ENCODE measurements at regions of chr5 and their contacts with region 1.

Region 1: DNA sequence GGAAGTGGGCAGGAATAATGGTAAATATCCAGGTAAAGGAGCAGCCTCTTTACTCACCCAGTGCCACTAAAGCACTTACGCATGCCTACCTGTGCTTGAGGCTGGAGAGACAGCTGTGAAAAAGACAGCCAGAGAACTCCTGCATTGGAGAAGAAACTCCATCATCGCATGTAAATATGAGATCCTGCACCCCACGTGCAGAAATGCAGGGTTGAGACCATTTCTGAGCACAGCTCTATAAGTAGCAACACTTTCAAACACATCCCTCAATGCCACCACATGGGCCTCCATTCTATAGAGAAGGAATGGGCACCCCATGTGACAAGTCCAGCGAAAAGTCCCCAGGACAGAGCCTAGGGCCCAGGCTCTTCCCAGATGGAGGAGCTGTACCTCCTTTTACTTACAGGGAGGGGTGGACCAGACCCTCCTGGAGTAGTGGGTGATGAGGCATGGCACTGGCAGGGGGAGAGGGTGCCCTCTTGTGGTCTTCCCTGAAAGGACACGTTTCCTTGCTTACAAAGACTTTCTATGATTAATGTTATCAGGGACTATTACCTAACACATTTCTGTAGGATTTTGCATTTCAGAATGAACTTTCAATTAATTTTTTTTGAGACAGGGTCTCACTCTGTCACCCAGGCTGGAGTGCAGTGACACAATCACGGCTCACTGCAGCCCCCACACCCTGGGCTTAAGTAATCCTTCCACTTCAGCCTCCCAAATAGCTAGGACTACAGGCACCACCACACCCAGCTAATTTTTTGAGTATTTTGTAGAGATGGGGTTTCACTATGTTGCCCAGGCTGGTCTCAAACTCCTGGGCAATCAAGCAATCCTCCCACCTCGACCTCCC is 55.3 kb upstream of the IL17B start:
- DNase-seq: peak; percentile 63
- ATAC-seq: peak; percentile 62
- H3K4me3 Mint-ChIP-seq: no peak overlapping the region
- H3K27ac Mint-ChIP-seq: no peak overlapping the region
- H3K4me1 Mint-ChIP-seq: peaks cover 28% of the 10 kb centered on the region
- H3K27me3 Mint-ChIP-seq: no peaks in the 10 kb centered on the region

Region 2: GRCh38 chr5:149317281-149318048 is 116.9 kb before region 1 on chr5:
- CTCF ChIA-PET with region 1: interaction called, 11 read pairs
- POLR2A ChIA-PET with region 1: no interaction called
- DNase-seq: peak; percentile 48
- ATAC-seq: peak; percentile 55
- H3K4me3 Mint-ChIP-seq: no peak overlapping the region
- H3K27ac Mint-ChIP-seq: no peak overlapping the region
- H3K4me1 Mint-ChIP-seq: no peaks in the 10 kb centered on the region
- H3K27me3 Mint-ChIP-seq: no peaks in the 10 kb centered on the region

Region 3: DNA sequence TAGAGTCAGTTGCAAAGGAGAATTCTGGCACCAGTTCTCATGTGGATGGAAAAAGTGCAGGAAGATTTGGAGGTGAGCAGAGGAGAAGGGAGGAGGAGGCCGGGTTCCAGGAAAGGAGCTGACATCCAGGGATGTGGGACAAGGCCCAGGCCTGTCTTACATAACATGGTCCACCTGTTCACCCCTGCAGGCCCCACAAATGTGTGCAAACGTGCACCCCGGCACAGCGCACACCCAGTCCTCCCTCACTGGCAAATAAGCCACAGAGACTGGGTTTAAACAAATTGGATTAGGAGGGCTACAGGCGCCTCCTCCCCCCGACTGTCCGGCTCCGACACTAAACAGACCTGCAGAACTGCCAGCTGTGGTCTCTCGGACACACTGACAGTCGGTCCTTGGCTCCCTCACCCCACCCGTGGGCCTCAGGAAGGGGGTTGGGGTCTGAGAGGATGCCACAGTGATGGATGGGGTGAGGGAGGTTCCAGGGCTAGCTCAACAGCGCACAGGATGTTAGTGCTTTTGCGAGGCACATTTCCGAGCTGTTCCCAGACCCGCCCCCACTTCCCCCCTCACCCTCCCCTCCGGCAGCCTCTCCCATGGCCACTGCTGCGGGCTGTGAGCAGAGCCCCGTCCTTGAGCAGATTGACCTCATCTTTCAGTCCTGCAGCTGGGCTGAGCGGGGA is 11.9 kb before region 1 on chr5:
- CTCF ChIA-PET with region 1: interaction called, 32 read pairs
- POLR2A ChIA-PET with region 1: no interaction called
- DNase-seq: no peak
- ATAC-seq: peak; percentile 50
- H3K4me3 Mint-ChIP-seq: no peak overlapping the region
- H3K27ac Mint-ChIP-seq: peak overlapping the region; percentile 32
- H3K4me1 Mint-ChIP-seq: peaks cover 7% of the 10 kb centered on the region
- H3K27me3 Mint-ChIP-seq: peaks cover 4% of the 10 kb centered on the region

Region 4: GRCh38 chr5:149551200-149552037 is 117.0 kb after region 1 on chr5 and contains the start of gene CSNK1A1:
- CTCF ChIA-PET with region 1: interaction called, 11 read pairs
- POLR2A ChIA-PET with region 1: interaction called, 4 read pairs
- DNase-seq: peak; percentile 99
- ATAC-seq: peak; percentile 93
- H3K4me3 Mint-ChIP-seq: peak within 1 kb of the TSS; percentile 96
- H3K27ac Mint-ChIP-seq: peak within 1 kb of the TSS; percentile 99
- H3K4me1 Mint-ChIP-seq: peaks cover 33% of the 10 kb centered on the region
- H3K27me3 Mint-ChIP-seq: no peaks in the 10 kb centered on the region
- total RNA-seq, gene CSNK1A1: 163 to 177 TPM

Region 5: GRCh38 chr5:149567226-149567625 is 132.8 kb after region 1 on chr5:
- CTCF ChIA-PET with region 1: interaction called, 44 read pairs
- POLR2A ChIA-PET with region 1: no interaction called
- DNase-seq: no peak
- ATAC-seq: no peak
- H3K4me3 Mint-ChIP-seq: no peak overlapping the region
- H3K27ac Mint-ChIP-seq: no peak overlapping the region
- H3K4me1 Mint-ChIP-seq: peaks cover 7% of the 10 kb centered on the region
- H3K27me3 Mint-ChIP-seq: no peaks in the 10 kb centered on the region

Region 6: GRCh38 chr5:149917073-149917676 is 482.8 kb after region 1 on chr5:
- CTCF ChIA-PET with region 1: no interaction called
- POLR2A ChIA-PET with region 1: no interaction called
- DNase-seq: no peak
- ATAC-seq: no peak
- H3K4me3 Mint-ChIP-seq: no peak overlapping the region
- H3K27ac Mint-ChIP-seq: no peak overlapping the region
- H3K4me1 Mint-ChIP-seq: peaks cover 5% of the 10 kb centered on the region
- H3K27me3 Mint-ChIP-seq: peaks cover 19% of the 10 kb centered on the region